ENCODE measurements at regions of chr6 and their contacts with region 1.

Region 1: GRCh38 chr6:155327326-155328073 is 13.2 kb upstream of the TFB1M start:
- DNase-seq: peak; percentile 71
- H3K4me3 Mint-ChIP-seq: no peak overlapping the region
- H3K27ac Mint-ChIP-seq: peak overlapping the region; percentile 3
- H3K4me1 Mint-ChIP-seq: peaks cover 17% of the 10 kb centered on the region
- H3K27me3 Mint-ChIP-seq: no peaks in the 10 kb centered on the region

Region 2: GRCh38 chr6:155340464-155341129 is 13.1 kb after region 1 on chr6:
- CTCF ChIA-PET with region 1: no interaction called
- DNase-seq: no peak
- H3K4me3 Mint-ChIP-seq: no peak overlapping the region
- H3K27ac Mint-ChIP-seq: no peak overlapping the region
- H3K4me1 Mint-ChIP-seq: peaks cover 42% of the 10 kb centered on the region
- H3K27me3 Mint-ChIP-seq: no peaks in the 10 kb centered on the region

Region 3: DNA sequence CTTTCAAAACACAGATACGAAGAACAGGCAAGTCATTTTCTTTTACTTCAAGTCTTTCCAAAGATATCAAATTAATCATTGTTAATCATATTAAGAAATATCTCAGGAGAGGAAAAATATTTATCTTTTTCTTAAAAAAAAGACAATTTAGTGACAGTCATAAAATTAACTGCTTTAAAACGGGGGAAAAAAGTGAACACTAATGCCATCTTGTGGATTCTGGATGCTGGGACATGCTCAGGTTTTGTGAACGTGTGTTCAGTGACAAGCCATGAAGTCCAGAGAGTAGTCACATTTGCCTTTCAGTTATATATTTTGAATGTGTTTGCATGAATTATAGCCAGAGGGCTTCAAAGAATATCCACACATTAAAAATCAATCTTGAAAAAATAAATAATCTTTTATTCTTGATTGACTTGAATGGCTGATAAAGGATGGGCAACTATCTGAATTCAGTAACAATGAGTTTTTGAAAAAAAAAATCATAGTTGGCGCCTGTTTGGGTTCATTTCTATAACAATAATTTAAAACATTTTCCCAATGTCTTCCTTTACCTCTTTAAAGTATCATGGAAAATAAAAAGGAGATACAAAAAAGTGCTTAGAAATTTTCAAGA is 202.8 kb after region 1 on chr6:
- CTCF ChIA-PET with region 1: interaction called, 22 read pairs
- DNase-seq: peak; percentile 22
- H3K4me3 Mint-ChIP-seq: no peak overlapping the region
- H3K27ac Mint-ChIP-seq: no peak overlapping the region
- H3K4me1 Mint-ChIP-seq: peaks cover 7% of the 10 kb centered on the region
- H3K27me3 Mint-ChIP-seq: no peaks in the 10 kb centered on the region

Measured in activated naive CD4-positive, alpha-beta T cell treated with anti-CD3 and anti-CD28 coated beads, Interleukin-2, amount 10 ng/mL, durations not matched to agents 7 days and 5 days (primary cell).